ENCODE measurements at regions of chr12 and their contacts with region 1.

Region 1: GRCh38 chr12:95998611-95999286 is 2.6 kb upstream of the HAL start:
- DNase-seq: peak; percentile 71
- H3K4me3 Mint-ChIP-seq: no peak overlapping the region
- H3K27ac Mint-ChIP-seq: no peak overlapping the region
- H3K4me1 Mint-ChIP-seq: peaks cover 3% of the 10 kb centered on the region
- H3K27me3 Mint-ChIP-seq: no peaks in the 10 kb centered on the region

Region 2: GRCh38 chr12:95820102-95820703 is 178.5 kb before region 1 on chr12:
- CTCF ChIA-PET with region 1: no interaction called
- intact Hi-C with region 1: loop called (anchors 1 kb)
- DNase-seq: peak; percentile 28
- H3K4me3 Mint-ChIP-seq: no peak overlapping the region
- H3K27ac Mint-ChIP-seq: no peak overlapping the region
- H3K4me1 Mint-ChIP-seq: no peaks in the 10 kb centered on the region
- H3K27me3 Mint-ChIP-seq: peaks cover 14% of the 10 kb centered on the region

Region 3: GRCh38 chr12:95918194-95918993 is 80.4 kb before region 1 on chr12:
- CTCF ChIA-PET with region 1: interaction called, 117 read pairs
- intact Hi-C with region 1: loop called (anchors 1 kb)
- DNase-seq: peak; percentile 65
- H3K4me3 Mint-ChIP-seq: no peak overlapping the region
- H3K27ac Mint-ChIP-seq: no peak overlapping the region
- H3K4me1 Mint-ChIP-seq: no peaks in the 10 kb centered on the region
- H3K27me3 Mint-ChIP-seq: peaks cover 2% of the 10 kb centered on the region

Region 4: DNA sequence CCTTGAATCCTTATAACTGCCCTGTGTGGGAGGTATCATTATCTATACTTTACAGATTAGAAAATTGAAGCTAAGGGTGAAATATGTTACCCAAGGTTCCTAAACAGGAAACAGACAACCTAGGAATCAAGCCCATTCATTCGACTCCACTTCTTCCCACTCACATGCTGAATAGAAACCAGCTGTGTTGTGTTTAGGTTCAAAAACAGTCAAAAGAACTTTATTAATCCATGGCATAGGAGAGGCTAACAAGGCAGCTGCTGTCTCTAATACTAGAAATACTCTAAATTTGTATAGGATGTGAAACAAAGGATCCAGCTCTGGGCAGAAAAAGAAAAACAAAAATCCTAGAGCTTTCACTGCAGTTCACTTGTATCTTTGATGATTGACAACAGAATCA is 45.7 kb before region 1 on chr12:
- CTCF ChIA-PET with region 1: interaction called, 13 read pairs
- intact Hi-C with region 1: no loop called
- DNase-seq: no peak
- H3K4me3 Mint-ChIP-seq: no peak overlapping the region
- H3K27ac Mint-ChIP-seq: no peak overlapping the region
- H3K4me1 Mint-ChIP-seq: no peaks in the 10 kb centered on the region
- H3K27me3 Mint-ChIP-seq: peaks cover 7% of the 10 kb centered on the region

Region 5: DNA sequence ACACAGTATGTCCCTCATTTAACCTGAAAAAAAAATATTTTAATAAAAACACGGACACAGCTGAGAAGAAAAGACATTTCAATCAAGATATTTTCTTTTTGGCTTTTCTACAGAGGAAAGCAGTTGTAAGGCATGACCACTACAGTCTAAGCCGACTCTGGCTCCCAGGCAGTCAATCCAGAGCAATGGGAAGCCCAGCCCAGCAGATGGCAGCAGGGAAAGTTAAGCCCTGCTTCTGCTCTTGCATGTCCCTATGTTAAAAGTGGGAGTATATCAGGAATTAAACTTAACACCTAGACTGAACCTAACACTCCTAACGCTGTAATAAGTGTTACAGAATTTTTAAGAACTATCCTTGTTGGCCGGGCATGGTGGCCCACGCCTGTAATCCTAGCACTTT is 16.9 kb after region 1 on chr12:
- CTCF ChIA-PET with region 1: interaction called, 12 read pairs
- intact Hi-C with region 1: no loop called
- DNase-seq: peak; percentile 12
- H3K4me3 Mint-ChIP-seq: no peak overlapping the region
- H3K27ac Mint-ChIP-seq: no peak overlapping the region
- H3K4me1 Mint-ChIP-seq: no peaks in the 10 kb centered on the region
- H3K27me3 Mint-ChIP-seq: no peaks in the 10 kb centered on the region